Heart left ventricle (tissue), 16 donors: ENCODE measurements at regions of chr16 and their contacts with region 1.

Region 1: DNA sequence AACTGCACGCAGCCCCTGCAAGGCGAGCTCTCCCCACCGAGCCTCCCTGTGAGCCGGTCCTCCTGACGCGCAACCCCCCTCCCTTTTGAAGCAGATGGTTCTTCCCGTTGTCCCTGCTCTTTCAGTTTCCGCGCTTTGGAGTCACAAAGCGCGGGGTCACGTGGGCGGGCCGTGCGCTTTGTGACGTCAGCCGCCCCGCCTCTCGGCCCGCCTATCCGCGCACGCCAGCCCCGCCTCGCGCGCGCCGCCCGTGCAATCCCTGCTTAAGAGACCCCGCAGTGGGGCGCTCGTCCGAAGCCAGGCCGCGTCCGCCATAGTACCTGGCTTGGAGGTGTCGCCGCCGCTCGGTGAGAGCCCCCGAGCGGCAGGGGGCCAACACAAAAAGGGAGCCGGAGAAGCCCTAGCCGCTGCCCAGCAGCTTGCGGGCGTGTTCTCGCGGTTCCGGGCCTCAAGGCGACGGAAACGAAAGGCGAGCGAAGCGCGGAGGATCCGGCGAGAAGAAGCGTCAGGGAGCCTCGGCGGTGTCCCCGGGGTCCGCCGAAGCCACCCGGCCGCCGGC is at the start of gene RBBP6:
- DNase-seq: peak; percentile 95 to 97 (median 96)
- ATAC-seq: peak; percentile 84 to 97 (median 96)
- H3K4me3 ChIP-seq: peak within 1 kb of the TSS; percentile 76 to 99 (median 94)
- H3K27ac ChIP-seq: peak within 1 kb of the TSS; percentile 98 to 100 (median 100)
- H3K4me1 ChIP-seq: peaks cover 0 to 36% (median 29%) of the 10 kb centered on the region in 12 donors
- H3K27me3 ChIP-seq: no peaks in the 10 kb centered on the region
- CTCF ChIP-seq: peak in 9 of 12 donors; percentile 12 to 65 (median 36)
- POLR2A ChIP-seq: peak; percentile 94 to 99
- total RNA-seq, gene RBBP6: 23.1 to 44.5 (median 36.3) TPM

Region 2: GRCh38 chr16:24626256-24626655 is 86.9 kb after region 1 on chr16:
- intact Hi-C with region 1: no loop called
- DNase-seq: no peak
- ATAC-seq: no peak
- H3K4me3 ChIP-seq: no peak overlapping the region
- H3K27ac ChIP-seq: no peak overlapping the region
- H3K4me1 ChIP-seq: no peaks in the 10 kb centered on the region
- H3K27me3 ChIP-seq: no peaks in the 10 kb centered on the region
- CTCF ChIP-seq: no peak
- POLR2A ChIP-seq: no peak

Region 3: DNA sequence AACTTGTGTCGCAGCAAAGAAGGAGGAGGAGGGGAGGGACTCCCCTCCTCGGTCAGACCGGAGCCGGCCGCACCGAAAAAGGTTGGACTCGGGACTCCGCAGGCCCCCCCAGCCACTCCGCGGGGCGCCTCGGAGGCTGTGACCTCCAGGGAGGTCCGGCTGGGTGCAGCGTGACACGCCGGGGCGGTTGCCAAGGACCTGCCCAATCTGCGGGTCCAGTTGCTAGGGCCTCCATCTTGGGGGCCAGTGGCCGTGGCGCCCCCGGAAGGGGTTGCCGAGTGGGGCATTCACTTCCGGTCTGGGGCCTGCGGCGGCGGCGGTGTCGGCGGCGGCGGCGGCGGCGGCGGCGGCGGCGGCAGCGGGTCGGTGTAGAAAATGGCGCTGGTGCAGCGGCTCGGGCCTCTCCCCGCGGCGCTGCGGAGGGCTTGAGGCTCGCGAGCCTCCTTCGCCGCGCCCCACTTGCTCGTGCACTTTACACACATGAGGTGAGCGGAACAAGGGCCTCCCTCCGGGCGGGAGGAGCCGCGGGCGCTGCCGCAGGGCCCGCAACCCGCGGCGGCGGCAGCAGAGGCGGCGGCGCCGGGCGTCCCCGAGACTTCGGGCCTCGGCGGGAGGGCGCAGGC is 190.1 kb after region 1 on chr16 and contains the start of gene TNRC6A:
- intact Hi-C with region 1: loop called in 2 of 10 experiments (anchors 5 to 10 kb)
- DNase-seq: peak; percentile 91 to 96 (median 94)
- ATAC-seq: peak; percentile 89 to 96 (median 94)
- H3K4me3 ChIP-seq: peak within 1 kb of the TSS; percentile 57 to 94 (median 84)
- H3K27ac ChIP-seq: peak within 1 kb of the TSS; percentile 83 to 99 (median 94)
- H3K4me1 ChIP-seq: peaks cover 3 to 43% (median 37%) of the 10 kb centered on the region in 12 donors
- H3K27me3 ChIP-seq: no peaks in the 10 kb centered on the region
- CTCF ChIP-seq: no peak
- POLR2A ChIP-seq: peak in 1 of 2 donors; percentile 72
- total RNA-seq, gene TNRC6A: 26.4 to 53.1 (median 37.6) TPM

Region 4: DNA sequence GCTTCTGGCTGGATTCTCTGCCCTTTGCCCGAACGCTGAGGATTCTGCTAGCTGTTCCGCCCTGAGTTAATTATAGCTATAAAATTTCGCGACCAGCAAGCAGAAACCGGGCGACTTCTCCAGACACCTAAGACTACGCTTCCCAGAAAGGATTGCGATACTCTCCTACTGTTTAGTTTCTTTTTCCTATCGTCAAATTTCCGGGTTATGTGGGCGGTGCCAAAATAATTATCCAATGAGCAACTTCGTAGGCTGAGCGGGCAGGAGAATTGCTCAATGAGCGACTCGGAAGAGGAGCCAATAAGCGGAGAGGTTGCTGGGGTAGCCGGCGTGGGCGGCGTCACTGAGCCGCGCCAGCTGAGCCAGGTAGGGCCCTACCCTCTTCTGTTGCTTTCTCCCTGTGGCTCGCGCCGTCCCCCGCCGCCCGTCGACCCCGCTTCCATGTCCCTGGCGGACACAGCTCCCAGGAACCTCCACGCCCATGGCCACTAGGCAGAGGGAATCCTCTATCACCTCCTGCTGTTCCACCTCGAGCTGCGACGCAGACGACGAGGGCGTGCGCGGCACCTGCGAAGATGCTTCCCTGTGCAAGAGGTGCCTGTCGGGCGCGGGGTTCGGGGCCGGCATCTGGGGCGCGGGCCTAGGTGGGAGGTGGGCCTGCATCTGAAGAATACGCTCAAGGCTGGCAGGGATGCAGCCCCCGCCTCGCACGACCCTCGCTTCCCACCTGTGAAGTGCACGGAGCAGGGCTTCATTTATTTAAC is 572.2 kb after region 1 on chr16 and contains the start of gene LCMT1:
- intact Hi-C with region 1: loop called in 1 of 10 experiments (anchors 10 kb)
- DNase-seq: peak; percentile 89 to 94 (median 94)
- ATAC-seq: peak; percentile 85 to 91 (median 89)
- H3K4me3 ChIP-seq: peak within 1 kb of the TSS; percentile 47 to 99 (median 94)
- H3K27ac ChIP-seq: peak within 1 kb of the TSS; percentile 60 to 93 (median 87)
- H3K4me1 ChIP-seq: peaks cover 0 to 46% (median 34%) of the 10 kb centered on the region in 12 donors
- H3K27me3 ChIP-seq: no peaks in the 10 kb centered on the region
- CTCF ChIP-seq: peak in 3 of 12 donors; percentile 5 to 14 (median 9)
- POLR2A ChIP-seq: peak in 1 of 2 donors; percentile 69
- total RNA-seq, gene LCMT1: 33.6 to 50.0 (median 39.6) TPM

Region 5: GRCh38 chr16:25257504-25257955 is 718.2 kb after region 1 on chr16 and contains the start of gene ZKSCAN2:
- intact Hi-C with region 1: loop called in 1 of 10 experiments (anchors 10 kb)
- DNase-seq: peak; percentile 92 to 95 (median 95)
- ATAC-seq: peak; percentile 93 to 98 (median 98)
- H3K4me3 ChIP-seq: peak within 1 kb of the TSS; percentile 62 to 97 (median 80)
- H3K27ac ChIP-seq: peak within 1 kb of the TSS; percentile 89 to 100 (median 100)
- H3K4me1 ChIP-seq: peaks cover 0 to 41% (median 29%) of the 10 kb centered on the region in 12 donors
- H3K27me3 ChIP-seq: no peaks in the 10 kb centered on the region
- CTCF ChIP-seq: peak in 1 of 12 donors; percentile 8
- POLR2A ChIP-seq: peak; percentile 40 to 85
- total RNA-seq, gene ZKSCAN2: 3.5 to 8.0 (median 5.1) TPM